ENCODE measurements at regions of chr9 and their contacts with region 1.

Region 1: DNA sequence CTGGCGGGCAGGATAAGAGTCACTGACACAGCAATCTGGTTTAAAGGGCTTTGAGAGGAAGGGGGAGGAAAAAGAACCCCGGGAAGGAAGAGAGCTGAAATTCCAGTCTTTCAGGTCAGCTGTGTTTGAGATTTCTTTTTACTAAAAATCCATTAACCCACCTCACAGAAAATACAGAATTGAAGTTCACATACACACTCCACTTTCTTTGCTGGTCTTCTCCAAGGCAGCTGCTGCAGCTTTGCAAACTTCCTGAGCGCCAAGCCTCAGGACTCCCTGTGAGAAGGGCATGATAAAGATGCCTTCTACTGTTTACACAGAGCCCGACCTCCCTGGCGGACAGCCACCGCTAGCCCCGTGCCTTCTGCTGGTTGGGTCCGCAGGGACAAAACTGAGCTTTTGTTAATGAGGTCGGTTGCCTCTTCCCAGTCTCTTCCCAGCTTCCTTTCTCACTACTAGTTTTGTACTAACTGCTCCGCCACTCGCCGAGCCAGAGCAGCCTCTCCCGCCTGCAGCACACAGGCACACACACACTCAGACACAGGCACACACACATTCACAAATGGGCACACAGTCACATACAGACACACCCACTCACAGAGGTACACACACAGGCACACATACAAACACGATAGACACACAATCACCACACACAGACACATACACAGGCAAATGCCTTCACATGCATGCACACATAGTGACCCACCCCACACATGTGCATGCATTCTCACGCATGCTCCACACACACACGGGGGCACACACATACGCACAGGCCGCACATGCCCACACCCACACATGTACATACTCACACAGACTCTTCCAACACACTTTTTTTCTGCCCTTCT is at the start of gene FREM1:
- DNase-seq: peak; percentile 55
- ATAC-seq: peak; percentile 94
- H3K4me3 ChIP-seq: peak within 1 kb of the TSS; percentile 1 to 66 (median 63); a peak in 4 of 6 replicates
- H3K27ac ChIP-seq: peak within 1 kb of the TSS; percentile 61
- H3K4me1 ChIP-seq: peaks cover 84% of the 10 kb centered on the region
- H3K27me3 ChIP-seq: no peaks in the 10 kb centered on the region; a peak in 1 of 5 replicates
- CTCF ChIP-seq: 0 out of 2 replicates have a peak, but pooled peaks have one; percentile 23
- EP300 ChIP-seq: peak in 1 of 2 experiments; percentile 18; a peak in 1 of 4 replicates
- POLR2A ChIP-seq: no peak
- RAD21 ChIP-seq: no peak
- total RNA-seq, gene FREM1: 33.6 and 64.3 TPM in 2 replicates

Region 2: DNA sequence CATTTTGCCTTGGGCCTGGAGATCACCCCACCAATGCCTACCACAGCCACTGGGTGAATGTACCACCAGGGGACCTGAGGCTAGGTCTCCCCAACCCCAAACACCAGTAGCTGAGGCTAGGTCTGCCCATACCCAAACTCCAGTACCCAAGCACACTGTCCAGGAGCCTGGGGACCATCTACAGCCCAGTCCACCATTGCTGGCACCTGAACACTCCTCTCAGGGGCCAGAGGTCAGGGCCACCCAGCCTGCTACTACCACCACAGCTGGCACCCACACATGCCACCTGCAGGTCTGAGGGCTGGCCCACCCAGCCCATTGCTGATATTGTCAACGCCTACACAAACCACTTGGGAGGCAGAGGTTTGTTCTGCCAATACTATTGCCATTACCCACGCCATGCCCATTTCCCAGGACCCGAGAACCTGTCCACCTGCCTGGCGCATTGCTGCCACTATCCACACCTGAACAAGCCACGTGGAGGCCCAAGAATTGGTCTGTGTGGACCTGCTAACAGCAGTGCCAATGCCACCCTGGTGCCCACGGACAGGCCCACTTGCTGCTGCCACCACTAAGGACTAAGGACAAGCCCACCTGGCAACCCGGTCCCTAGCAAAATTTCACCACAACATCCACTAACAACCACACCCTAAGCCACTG is 276.1 kb before region 1 on chr9:
- CTCF ChIA-PET with region 1: no interaction called
- POLR2A ChIA-PET with region 1: no interaction called
- in situ Hi-C with region 1: no loop called
- intact Hi-C with region 1: no loop called
- DNase-seq: no peak
- ATAC-seq: no peak
- H3K4me3 ChIP-seq: no peak overlapping the region
- H3K27ac ChIP-seq: no peak overlapping the region
- H3K4me1 ChIP-seq: no peaks in the 10 kb centered on the region
- H3K27me3 ChIP-seq: no peaks in the 10 kb centered on the region
- CTCF ChIP-seq: no peak
- EP300 ChIP-seq: no peak
- POLR2A ChIP-seq: no peak
- RAD21 ChIP-seq: no peak

Region 3: GRCh38 chr9:14899815-14900193 is 10.4 kb before region 1 on chr9:
- CTCF ChIA-PET with region 1: no interaction called
- POLR2A ChIA-PET with region 1: interaction called, 4 read pairs
- in situ Hi-C with region 1: no loop called
- intact Hi-C with region 1: loop called (anchors 1 kb)
- DNase-seq: peak; percentile 21
- ATAC-seq: peak; percentile 93
- H3K4me3 ChIP-seq: peak overlapping the region in 2 of 3 experiments; percentile 12 to 13; a peak in 2 of 6 replicates
- H3K27ac ChIP-seq: peak overlapping the region; percentile 16
- H3K4me1 ChIP-seq: peaks cover 59% of the 10 kb centered on the region
- H3K27me3 ChIP-seq: no peaks in the 10 kb centered on the region; a peak in 2 of 5 replicates
- CTCF ChIP-seq: no peak
- EP300 ChIP-seq: no peak
- POLR2A ChIP-seq: no peak
- RAD21 ChIP-seq: no peak

Region 4: DNA sequence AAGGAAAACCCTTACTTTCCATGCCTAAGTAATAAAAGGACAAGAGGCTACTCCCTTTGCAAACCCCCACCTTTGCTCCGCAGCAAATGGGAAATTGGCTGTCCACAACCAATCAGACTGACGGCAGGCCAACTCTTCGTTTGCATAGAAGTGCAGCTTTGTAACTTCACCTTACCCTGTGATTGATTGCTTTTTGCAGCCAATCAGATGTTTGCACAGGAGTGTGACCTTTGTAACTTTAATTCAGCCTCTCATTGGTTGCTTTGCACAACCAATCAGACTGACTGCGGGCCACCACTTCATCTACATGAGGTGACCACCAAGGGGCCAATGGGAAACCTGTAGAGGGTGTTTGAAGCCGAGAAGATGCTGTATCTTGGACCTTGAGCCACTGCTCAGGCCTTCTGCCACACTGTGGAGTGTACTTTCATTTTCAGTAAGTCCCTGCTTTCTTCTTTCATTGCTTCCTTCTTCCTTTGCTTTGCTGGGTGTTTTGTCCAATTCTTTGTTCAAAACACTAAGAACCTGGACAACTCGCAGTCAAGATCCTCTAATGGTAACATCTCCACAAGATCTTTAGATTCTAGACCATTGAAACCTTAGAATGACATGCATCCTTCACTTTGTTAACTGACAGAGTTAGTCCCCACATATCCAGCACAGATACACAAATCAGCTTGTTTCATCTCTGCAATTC is 51.3 kb after region 1 on chr9:
- CTCF ChIA-PET with region 1: no interaction called
- POLR2A ChIA-PET with region 1: no interaction called
- in situ Hi-C with region 1: no loop called
- intact Hi-C with region 1: loop called (anchors 2 kb)
- DNase-seq: peak; percentile 99
- ATAC-seq: peak; percentile 100
- H3K4me3 ChIP-seq: peak overlapping the region; percentile 58 to 76 (median 72)
- H3K27ac ChIP-seq: peak overlapping the region; percentile 100
- H3K4me1 ChIP-seq: peaks cover 40% of the 10 kb centered on the region
- H3K27me3 ChIP-seq: no peaks in the 10 kb centered on the region; a peak in 1 of 5 replicates
- CTCF ChIP-seq: peak; percentile 50
- EP300 ChIP-seq: no peak; a peak in 1 of 4 replicates
- POLR2A ChIP-seq: peak; percentile 86 to 89
- RAD21 ChIP-seq: no peak; the same call in 1 of the 2 replicates

Measured in HepG2 (cell line).